WTC11 (cell line): ENCODE measurements at regions of chr16 and their contacts with region 1.

Region 1: GRCh38 chr16:740764-741505 is at the start of gene CIAO3:
- DNase-seq: peak; percentile 93
- ATAC-seq: peak; percentile 71
- H3K4me3 Mint-ChIP-seq: peak within 1 kb of the TSS; percentile 79
- H3K27ac Mint-ChIP-seq: peak within 1 kb of the TSS; percentile 78
- H3K4me1 Mint-ChIP-seq: peaks cover 15% of the 10 kb centered on the region
- H3K27me3 Mint-ChIP-seq: no peaks in the 10 kb centered on the region
- CTCF ChIP-seq: peak; percentile 79
- total RNA-seq, gene CIAO3: 32.8 to 50.9 TPM (median 32.8 TPM) in 3 replicates

Region 2: GRCh38 chr16:728131-728889 is 12.6 kb before region 1 on chr16:
- CTCF ChIA-PET with region 1: interaction called, 28 read pairs
- POLR2A ChIA-PET with region 1: no interaction called
- DNase-seq: peak; percentile 77
- ATAC-seq: peak; percentile 10
- H3K4me3 Mint-ChIP-seq: peak overlapping the region; percentile 64
- H3K27ac Mint-ChIP-seq: no peak overlapping the region
- H3K4me1 Mint-ChIP-seq: no peaks in the 10 kb centered on the region
- H3K27me3 Mint-ChIP-seq: peaks cover 2% of the 10 kb centered on the region; the same call in 1 of the 2 replicates
- CTCF ChIP-seq: no peak

Region 3: DNA sequence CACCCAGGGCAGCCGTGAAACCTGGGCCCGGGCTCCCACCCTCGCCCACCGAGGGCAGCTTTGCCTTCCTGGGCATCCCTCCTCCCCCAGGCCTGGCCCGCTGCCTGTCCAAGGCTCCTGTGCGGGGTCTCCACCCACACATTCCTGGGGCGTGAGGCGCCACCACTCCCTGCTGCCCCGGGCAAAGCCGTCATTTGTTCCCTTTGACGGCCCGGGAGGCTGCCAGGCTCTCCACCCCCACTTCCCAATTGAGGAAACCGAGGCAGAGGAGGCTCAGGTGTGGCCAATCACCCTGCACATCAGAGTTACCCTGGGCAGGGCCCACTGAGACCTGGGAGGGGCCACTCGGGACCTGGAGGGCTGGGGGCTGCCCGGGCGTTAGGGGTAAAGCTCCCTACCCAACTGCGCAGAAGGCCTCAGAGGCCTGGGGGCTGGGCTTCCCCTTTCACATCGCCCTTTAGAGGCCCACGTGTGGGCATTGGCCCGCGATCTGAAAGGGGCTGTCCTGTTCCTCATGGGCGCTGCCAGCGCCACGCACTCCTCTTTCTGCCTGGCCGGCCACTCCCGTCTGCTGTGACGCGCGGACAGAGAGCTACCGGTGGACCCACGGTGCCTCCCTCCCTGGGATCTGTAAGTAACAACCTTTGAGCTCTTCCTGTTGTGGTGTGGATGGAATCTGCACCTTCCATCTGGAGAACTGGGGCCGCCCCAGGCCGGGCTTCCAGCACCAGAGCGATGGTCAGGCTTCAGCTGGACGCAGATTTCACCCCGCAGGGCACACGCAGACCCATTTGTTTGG is 19.8 kb after region 1 on chr16 and contains the start of gene MSLN:
- CTCF ChIA-PET with region 1: interaction called, 11 read pairs
- POLR2A ChIA-PET with region 1: interaction called, 3 read pairs
- DNase-seq: no peak
- ATAC-seq: no peak
- H3K4me3 Mint-ChIP-seq: no peak within 1 kb of the TSS
- H3K27ac Mint-ChIP-seq: peak within 1 kb of the TSS; percentile 60; the same call in 1 of the 2 replicates
- H3K4me1 Mint-ChIP-seq: no peaks in the 10 kb centered on the region
- H3K27me3 Mint-ChIP-seq: peaks cover 6% of the 10 kb centered on the region; the same call in 1 of the 2 replicates
- CTCF ChIP-seq: no peak
- total RNA-seq, gene MSLN: 0.20 to 0.55 TPM (median 0.46 TPM) in 3 replicates